A673 (cell line): ENCODE measurements at regions of chr1 and their contacts with region 1.

Region 1: GRCh38 chr1:209576798-209577197 is 6.7 kb upstream of the CAMK1G start:
- DNase-seq: peak; percentile 90
- H3K4me3 ChIP-seq: no peak overlapping the region
- H3K27ac ChIP-seq: no peak overlapping the region
- H3K4me1 ChIP-seq: peaks cover 24% of the 10 kb centered on the region
- H3K27me3 ChIP-seq: no peaks in the 10 kb centered on the region
- CTCF ChIP-seq: peak; percentile 98

Region 2: GRCh38 chr1:209542585-209542984 is 34.2 kb before region 1 on chr1:
- CTCF ChIA-PET with region 1: no interaction called
- POLR2A ChIA-PET with region 1: no interaction called
- intact Hi-C with region 1: no loop called
- DNase-seq: no peak
- H3K4me3 ChIP-seq: no peak overlapping the region
- H3K27ac ChIP-seq: no peak overlapping the region
- H3K4me1 ChIP-seq: peaks cover 11% of the 10 kb centered on the region
- H3K27me3 ChIP-seq: peaks cover 55% of the 10 kb centered on the region
- CTCF ChIP-seq: no peak

Region 3: GRCh38 chr1:209692745-209693504 is 116.1 kb after region 1 on chr1:
- CTCF ChIA-PET with region 1: interaction called, 4 read pairs
- POLR2A ChIA-PET with region 1: no interaction called
- intact Hi-C with region 1: loop called (anchors 1 kb)
- DNase-seq: peak; percentile 95
- H3K4me3 ChIP-seq: no peak overlapping the region
- H3K27ac ChIP-seq: peak overlapping the region; percentile 50
- H3K4me1 ChIP-seq: peaks cover 46% of the 10 kb centered on the region
- H3K27me3 ChIP-seq: no peaks in the 10 kb centered on the region
- CTCF ChIP-seq: peak; percentile 95

Region 4: DNA sequence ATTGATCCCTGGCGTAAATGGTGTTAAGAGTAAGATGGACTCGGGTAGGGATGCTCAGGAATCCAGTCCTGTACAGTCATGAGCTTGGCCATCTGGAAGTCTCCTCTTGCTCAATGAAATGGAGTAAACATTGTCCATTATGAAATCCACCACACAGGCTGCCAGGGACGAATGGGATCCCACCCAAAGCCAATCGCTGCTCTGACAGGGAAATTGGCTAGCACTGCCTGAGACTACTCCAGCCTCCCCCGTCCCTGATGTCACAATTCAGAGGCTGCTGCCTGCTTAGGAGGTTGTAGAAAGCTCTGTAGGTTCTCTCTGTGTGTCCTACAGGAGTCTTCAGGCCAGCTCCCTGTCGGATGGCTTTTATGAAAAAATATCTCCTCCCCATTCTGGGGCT is 127.8 kb after region 1 on chr1 and contains the start of gene HSD11B1:
- CTCF ChIA-PET with region 1: no interaction called
- POLR2A ChIA-PET with region 1: no interaction called
- intact Hi-C with region 1: no loop called
- DNase-seq: no peak
- H3K4me3 ChIP-seq: no peak within 1 kb of the TSS
- H3K27ac ChIP-seq: no peak within 1 kb of the TSS
- H3K4me1 ChIP-seq: no peaks in the 10 kb centered on the region
- H3K27me3 ChIP-seq: no peaks in the 10 kb centered on the region
- CTCF ChIP-seq: no peak
- total RNA-seq, gene HSD11B1: not detected in 2 replicates

Region 5: DNA sequence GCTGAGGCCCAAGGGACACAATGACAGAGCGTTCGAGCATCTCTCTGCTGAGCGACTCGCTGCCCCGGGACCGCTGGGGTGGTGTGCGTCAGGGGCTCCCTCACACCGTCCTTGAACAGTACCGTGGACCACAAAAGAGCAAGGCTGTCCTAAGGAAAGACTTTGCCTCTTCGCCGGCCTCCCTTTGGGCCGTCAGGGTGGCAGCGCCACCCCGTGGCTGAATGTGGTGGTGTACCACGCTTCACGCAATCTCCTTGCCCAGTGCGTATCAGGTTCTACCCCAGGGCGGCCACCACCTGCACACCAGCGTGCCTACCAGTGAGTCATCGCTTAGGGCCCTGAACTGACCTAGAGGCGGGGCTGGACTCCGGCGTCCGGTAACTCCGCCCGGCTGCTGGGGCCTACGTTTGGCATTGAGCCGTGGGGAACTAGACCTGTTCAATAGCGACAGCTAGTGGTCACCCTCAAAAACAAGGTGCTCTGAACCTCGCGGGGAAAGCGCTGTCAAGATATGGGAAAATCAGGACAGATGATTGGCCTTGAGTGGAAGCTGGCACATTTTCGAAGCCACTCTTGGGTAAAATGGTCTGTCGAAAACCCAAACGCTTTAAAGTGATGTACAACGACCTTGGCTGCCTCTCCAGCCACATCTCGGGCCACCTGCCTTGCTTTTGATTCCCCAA is 170.9 kb after region 1 on chr1:
- CTCF ChIA-PET with region 1: no interaction called
- POLR2A ChIA-PET with region 1: no interaction called
- intact Hi-C with region 1: loop called (anchors 5 kb)
- DNase-seq: peak; percentile 72
- H3K4me3 ChIP-seq: peak overlapping the region; percentile 34
- H3K27ac ChIP-seq: no peak overlapping the region
- H3K4me1 ChIP-seq: no peaks in the 10 kb centered on the region
- H3K27me3 ChIP-seq: no peaks in the 10 kb centered on the region
- CTCF ChIP-seq: peak; percentile 96

Region 6: GRCh38 chr1:209989525-209989924 is 412.7 kb after region 1 on chr1:
- CTCF ChIA-PET with region 1: no interaction called
- POLR2A ChIA-PET with region 1: no interaction called
- intact Hi-C with region 1: loop called (anchors 10 kb)
- DNase-seq: peak; percentile 58
- H3K4me3 ChIP-seq: no peak overlapping the region
- H3K27ac ChIP-seq: peak overlapping the region; percentile 14
- H3K4me1 ChIP-seq: peaks cover 23% of the 10 kb centered on the region
- H3K27me3 ChIP-seq: no peaks in the 10 kb centered on the region
- CTCF ChIP-seq: peak; percentile 64